Activated naive CD4-positive, alpha-beta T cell treated with anti-CD3 and anti-CD28 coated beads for 36 hours (primary cell): ENCODE measurements at regions of chr13 and their contacts with region 1.

Region 1: GRCh38 chr13:52128714-52129700 is at the start of gene NEK5:
- DNase-seq: peak; percentile 68
- H3K4me3 Mint-ChIP-seq: peak within 1 kb of the TSS; percentile 70
- H3K27ac Mint-ChIP-seq: no peak within 1 kb of the TSS
- H3K4me1 Mint-ChIP-seq: peaks cover 12% of the 10 kb centered on the region
- H3K27me3 Mint-ChIP-seq: peaks cover 2% of the 10 kb centered on the region
- total RNA-seq, gene NEK5: 0.10 to 0.14 TPM

Region 2: GRCh38 chr13:51125498-51126226 is 1003.3 kb before region 1 on chr13:
- CTCF ChIA-PET with region 1: interaction called, 3 read pairs
- intact Hi-C with region 1: loop called (anchors 5 kb)
- DNase-seq: peak; percentile 67
- H3K4me3 Mint-ChIP-seq: no peak overlapping the region
- H3K27ac Mint-ChIP-seq: no peak overlapping the region
- H3K4me1 Mint-ChIP-seq: peaks cover 5% of the 10 kb centered on the region
- H3K27me3 Mint-ChIP-seq: peaks cover 8% of the 10 kb centered on the region

Region 3: GRCh38 chr13:51674279-51674678 is 454.7 kb before region 1 on chr13:
- CTCF ChIA-PET with region 1: no interaction called
- intact Hi-C with region 1: no loop called
- DNase-seq: no peak
- H3K4me3 Mint-ChIP-seq: no peak overlapping the region
- H3K27ac Mint-ChIP-seq: no peak overlapping the region
- H3K4me1 Mint-ChIP-seq: peaks cover 1% of the 10 kb centered on the region
- H3K27me3 Mint-ChIP-seq: no peaks in the 10 kb centered on the region

Region 4: DNA sequence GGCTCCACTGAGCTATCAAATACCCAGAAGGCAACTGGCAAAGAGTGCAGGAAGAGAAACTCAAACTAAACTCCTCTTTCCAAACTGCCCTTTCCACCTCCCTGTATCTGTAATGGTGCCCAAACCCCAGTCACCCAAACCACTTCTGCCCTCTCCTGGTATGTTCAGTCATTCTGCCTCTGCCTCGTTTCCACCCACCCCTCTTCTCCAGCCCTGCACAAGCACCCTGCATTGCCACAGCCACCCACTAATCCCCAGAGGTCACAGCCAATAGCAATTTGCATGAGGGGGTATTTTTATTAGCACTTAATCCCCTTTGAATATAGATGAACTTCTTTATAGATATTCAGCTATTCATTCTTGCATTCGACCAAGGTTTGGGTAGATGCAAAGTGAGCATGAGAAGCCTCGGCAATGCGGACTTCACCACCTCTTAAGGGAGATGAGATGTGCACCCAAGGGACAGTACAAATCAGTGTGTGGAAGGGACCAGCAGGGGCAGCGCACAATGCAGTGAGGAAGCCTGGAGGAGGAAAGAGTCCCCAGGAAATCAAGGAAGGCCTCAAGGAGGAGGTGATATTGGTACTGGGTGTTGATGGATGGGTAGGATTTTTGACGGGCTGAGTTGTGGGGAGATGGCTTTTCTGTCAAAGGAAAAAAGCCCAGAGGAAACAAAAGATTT is 296.4 kb before region 1 on chr13:
- CTCF ChIA-PET with region 1: interaction called, 8 read pairs
- intact Hi-C with region 1: loop called (anchors 1 kb)
- DNase-seq: peak; percentile 79
- H3K4me3 Mint-ChIP-seq: no peak overlapping the region
- H3K27ac Mint-ChIP-seq: peak overlapping the region; percentile 57
- H3K4me1 Mint-ChIP-seq: peaks cover 44% of the 10 kb centered on the region
- H3K27me3 Mint-ChIP-seq: no peaks in the 10 kb centered on the region

Region 5: DNA sequence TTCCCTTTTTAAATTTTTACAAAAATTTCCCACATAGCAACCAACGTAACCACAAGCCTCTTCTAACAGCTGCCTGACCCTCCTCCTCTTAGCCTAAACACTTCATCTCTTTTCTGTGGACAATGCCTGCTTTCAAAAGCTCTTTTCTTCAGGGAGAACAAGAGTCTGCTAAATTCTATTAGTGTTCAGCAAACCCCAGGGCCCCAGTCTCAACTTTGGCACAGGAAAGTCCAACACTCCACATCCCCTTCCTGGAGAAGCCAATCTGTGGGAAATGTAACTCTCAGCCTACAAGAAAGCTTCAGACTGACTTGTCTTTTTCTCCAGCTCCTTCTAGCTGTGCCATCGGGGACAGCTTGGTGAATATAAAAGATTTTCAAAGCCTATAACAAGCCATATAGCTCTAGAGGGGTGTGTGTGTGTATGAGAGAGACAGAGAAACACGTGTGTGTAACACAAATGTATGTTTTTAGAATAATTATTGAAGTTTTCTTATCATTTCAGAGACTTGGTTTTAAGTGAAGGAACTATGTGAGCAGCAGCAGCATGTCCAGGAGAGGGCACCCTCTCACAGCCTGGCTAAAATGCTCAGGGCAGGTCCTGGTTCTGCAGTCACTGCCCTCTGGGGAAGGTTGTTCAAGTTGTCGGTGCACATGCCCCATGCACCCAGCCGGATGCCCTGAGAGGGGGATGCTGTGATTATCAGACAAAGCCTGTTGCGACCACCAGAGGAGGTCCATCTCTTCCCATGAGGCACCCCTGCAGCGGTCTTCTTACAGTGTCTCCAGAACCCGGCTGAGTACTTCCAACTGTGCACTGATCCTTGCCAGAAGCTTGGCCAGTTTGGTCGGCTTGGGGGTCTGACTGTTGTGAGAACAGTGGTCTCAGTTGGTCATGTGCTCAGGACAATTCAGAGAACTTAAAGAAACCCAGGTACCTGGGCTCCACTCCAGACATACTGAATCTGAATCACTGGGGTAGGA is 232.8 kb before region 1 on chr13:
- CTCF ChIA-PET with region 1: interaction called, 43 read pairs
- intact Hi-C with region 1: loop called (anchors 1 kb)
- DNase-seq: peak; percentile 69
- H3K4me3 Mint-ChIP-seq: no peak overlapping the region
- H3K27ac Mint-ChIP-seq: no peak overlapping the region
- H3K4me1 Mint-ChIP-seq: no peaks in the 10 kb centered on the region
- H3K27me3 Mint-ChIP-seq: peaks cover 2% of the 10 kb centered on the region

Region 6: DNA sequence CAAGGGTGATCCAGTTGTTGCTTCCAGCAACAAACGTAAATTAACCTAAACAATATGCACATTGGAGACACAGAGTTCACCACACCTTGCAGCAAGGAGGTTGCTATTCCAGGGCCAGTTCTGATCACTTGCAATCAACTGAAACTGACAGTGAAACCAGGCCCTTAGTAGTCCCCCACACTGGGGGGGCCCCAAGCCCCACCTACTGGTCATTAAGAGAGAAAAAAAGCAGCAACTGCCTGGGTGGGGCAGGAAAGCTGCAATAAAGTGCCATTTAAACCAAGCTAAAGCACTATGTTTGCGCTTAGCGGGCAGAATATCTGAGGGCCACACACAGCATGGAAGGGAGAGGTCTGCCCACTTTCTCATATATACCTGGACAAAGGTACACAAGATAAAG is 169.2 kb before region 1 on chr13:
- CTCF ChIA-PET with region 1: no interaction called
- intact Hi-C with region 1: no loop called
- DNase-seq: no peak
- H3K4me3 Mint-ChIP-seq: no peak overlapping the region
- H3K27ac Mint-ChIP-seq: no peak overlapping the region
- H3K4me1 Mint-ChIP-seq: peaks cover 14% of the 10 kb centered on the region
- H3K27me3 Mint-ChIP-seq: no peaks in the 10 kb centered on the region

Region 7: DNA sequence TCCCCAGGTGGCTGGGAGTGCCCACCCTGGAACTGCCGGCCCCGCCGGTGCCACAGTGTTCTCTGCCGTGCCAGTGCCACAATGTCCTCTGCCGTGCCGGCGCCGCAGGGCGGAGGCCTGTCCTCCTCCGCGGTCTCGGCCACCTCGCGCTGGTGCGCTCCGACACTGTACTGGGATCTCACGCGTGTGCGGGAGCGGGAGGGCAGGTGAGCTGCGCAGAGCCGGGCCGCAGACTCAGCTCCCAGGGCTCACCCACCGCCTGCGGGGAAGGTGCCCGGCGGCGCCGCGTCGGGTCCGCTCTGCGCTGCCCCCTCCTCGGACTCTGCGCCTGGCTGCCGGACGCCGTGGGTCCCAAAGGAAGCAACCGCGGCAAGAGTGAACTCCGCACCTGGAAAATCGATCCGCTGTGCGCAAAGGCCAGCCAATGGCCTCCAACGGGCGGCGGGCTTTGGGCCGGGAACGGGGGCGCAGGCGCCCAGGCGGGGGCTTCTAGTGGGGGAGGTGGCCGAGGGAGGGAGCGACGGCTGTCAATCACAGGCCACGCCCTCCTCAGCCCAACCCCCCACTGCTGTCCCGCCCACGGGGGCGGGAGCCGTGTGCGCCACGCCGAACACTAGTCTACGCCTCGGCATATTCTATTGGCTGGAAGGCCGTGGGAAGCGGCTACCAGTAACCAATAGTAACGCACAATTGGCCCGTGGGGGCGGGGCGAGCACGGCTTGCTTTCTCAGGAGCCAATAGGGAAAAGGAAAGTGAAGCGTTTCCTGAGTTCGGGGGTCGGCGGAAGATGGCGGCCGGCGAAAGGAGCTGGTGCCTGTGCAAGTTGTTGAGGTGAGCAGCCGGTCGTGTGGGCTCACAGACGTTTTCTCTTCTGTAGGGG is 117.1 kb before region 1 on chr13 and contains the start of gene ALG11:
- CTCF ChIA-PET with region 1: interaction called, 13 read pairs
- intact Hi-C with region 1: loop called (anchors 2 kb)
- DNase-seq: peak; percentile 100
- H3K4me3 Mint-ChIP-seq: peak within 1 kb of the TSS; percentile 98
- H3K27ac Mint-ChIP-seq: peak within 1 kb of the TSS; percentile 85
- H3K4me1 Mint-ChIP-seq: peaks cover 14% of the 10 kb centered on the region
- H3K27me3 Mint-ChIP-seq: peaks cover 10% of the 10 kb centered on the region
- total RNA-seq, gene ALG11: 12.6 to 15.6 TPM

Region 8: DNA sequence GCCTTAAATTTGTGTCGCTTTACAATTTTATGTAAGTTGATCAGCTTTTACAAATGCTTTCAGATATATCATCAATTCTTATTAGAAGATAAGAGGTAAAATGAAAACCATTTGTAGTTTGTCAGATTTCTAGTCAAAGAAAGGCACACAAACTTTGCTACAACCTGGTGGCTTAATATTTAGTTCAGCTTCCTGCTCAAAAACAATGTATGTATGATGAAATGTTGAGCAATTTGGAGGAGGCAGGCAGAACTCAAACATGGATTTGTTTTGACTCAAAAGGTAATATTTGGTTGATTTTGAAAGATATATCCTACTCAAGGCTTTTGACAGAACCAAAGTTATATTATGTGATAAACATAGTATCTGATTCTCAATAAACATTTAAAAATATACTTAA is 24.4 kb before region 1 on chr13:
- CTCF ChIA-PET with region 1: interaction called, 11 read pairs
- intact Hi-C with region 1: loop called (anchors 2 kb)
- DNase-seq: no peak
- H3K4me3 Mint-ChIP-seq: no peak overlapping the region
- H3K27ac Mint-ChIP-seq: no peak overlapping the region
- H3K4me1 Mint-ChIP-seq: no peaks in the 10 kb centered on the region
- H3K27me3 Mint-ChIP-seq: no peaks in the 10 kb centered on the region